ENCODE measurements at regions of chr10 and their contacts with region 1.

Region 1: DNA sequence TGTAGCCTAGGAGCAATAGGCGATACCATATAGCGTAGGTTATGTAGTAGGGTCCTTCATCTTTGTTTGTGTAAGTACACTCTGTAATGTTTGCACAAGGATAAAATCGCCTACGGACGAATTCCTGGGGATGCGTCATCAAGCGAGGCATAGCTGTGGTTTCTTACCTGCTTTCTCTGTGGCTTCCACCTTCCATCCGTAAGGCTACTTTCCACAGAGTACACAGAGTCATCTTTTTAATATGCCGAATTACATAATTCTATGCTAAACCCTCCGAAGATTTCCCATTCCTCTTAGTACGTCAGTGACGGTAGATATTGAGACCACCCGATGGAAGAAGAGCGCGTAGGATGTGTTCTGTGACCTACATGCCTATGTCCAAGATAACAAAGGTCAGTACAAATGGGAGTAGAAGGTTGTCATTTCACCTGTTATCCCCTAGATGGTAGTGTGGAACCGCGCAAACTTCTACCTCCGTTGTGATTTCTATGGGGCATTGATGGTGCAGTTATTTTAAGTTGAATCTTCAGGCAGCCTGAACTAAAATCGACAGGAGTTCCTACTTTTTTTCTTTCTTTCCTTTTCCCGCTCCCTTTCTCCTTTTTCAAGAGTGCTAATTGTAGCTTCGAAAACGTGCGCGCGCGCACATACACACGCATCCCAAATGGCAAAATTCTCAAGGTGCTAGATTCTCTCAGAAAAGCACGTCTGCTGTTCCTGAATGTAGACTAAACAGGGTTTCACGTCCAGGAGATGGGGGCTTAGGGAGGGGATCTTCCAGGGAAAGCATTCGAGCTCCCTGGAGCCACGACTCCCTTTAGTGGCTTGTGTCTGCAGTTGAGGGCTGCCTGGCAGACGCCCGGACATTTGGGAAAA is 111.7 kb upstream of the MBL2 start:
- DNase-seq: peak; percentile 100
- ATAC-seq: peak; percentile 91
- H3K4me3 ChIP-seq: peak overlapping the region; percentile 52
- H3K27ac ChIP-seq: peak overlapping the region; percentile 52
- H3K4me1 ChIP-seq: peaks cover 25% of the 10 kb centered on the region
- H3K27me3 ChIP-seq: no peaks in the 10 kb centered on the region
- CTCF ChIP-seq: peak; percentile 100

Region 2: GRCh38 chr10:52729271-52730104 is 154.7 kb before region 1 on chr10:
- CTCF ChIA-PET with region 1: no interaction called
- POLR2A ChIA-PET with region 1: no interaction called
- intact Hi-C with region 1: no loop called
- DNase-seq: peak; percentile 95
- ATAC-seq: peak; percentile 93
- H3K4me3 ChIP-seq: peak overlapping the region; percentile 41
- H3K27ac ChIP-seq: no peak overlapping the region
- H3K4me1 ChIP-seq: peaks cover 16% of the 10 kb centered on the region
- H3K27me3 ChIP-seq: no peaks in the 10 kb centered on the region
- CTCF ChIP-seq: peak; percentile 100

Region 3: DNA sequence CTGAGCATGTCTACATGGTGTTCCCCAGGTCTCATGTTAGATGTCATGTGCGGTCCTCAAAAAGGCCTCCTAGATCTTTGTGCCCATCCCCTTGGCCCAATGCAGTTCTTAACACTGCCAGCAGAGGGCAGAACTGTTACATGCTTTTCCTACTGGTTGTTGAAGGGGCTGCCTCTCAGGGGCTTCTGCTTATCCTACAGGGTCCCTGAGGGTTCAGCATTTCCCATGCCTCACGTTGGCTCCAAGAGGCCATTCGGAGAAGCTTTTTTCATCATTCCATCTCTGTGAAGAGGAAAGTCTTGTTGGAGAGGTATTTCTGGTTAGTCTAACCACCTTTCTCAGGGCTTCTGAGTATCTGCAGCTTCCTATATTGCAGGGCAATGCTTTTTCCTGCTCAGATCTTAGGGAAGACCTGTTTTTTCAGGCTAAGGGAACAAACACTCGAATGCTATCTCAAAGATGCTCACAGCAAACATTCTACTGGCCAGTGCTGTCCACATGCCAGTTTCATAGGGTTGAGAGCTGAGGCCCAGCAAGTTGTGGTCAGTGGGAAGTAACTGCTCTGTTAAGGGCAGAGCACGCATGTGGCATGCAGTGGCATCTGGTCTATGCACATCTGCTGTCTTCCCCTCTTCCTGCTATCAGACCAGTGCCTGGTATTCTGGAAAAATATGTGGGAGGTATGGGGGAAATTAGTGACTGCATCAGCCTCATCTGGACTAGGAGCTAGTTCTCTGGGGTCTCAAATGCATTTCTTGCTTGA is 143.1 kb before region 1 on chr10:
- CTCF ChIA-PET with region 1: no interaction called
- POLR2A ChIA-PET with region 1: no interaction called
- intact Hi-C with region 1: loop called (anchors 5 kb)
- DNase-seq: peak; percentile 96
- ATAC-seq: peak; percentile 72
- H3K4me3 ChIP-seq: no peak overlapping the region
- H3K27ac ChIP-seq: no peak overlapping the region
- H3K4me1 ChIP-seq: no peaks in the 10 kb centered on the region
- H3K27me3 ChIP-seq: no peaks in the 10 kb centered on the region
- CTCF ChIP-seq: peak; percentile 100

Region 4: GRCh38 chr10:52864201-52865106 is 19.8 kb before region 1 on chr10:
- CTCF ChIA-PET with region 1: interaction called, 25 read pairs
- POLR2A ChIA-PET with region 1: interaction called, 5 read pairs
- intact Hi-C with region 1: loop called (anchors 1 kb)
- DNase-seq: peak; percentile 100
- ATAC-seq: peak; percentile 100
- H3K4me3 ChIP-seq: no peak overlapping the region
- H3K27ac ChIP-seq: peak overlapping the region; percentile 81
- H3K4me1 ChIP-seq: peaks cover 22% of the 10 kb centered on the region
- H3K27me3 ChIP-seq: no peaks in the 10 kb centered on the region
- CTCF ChIP-seq: no peak

Region 5: DNA sequence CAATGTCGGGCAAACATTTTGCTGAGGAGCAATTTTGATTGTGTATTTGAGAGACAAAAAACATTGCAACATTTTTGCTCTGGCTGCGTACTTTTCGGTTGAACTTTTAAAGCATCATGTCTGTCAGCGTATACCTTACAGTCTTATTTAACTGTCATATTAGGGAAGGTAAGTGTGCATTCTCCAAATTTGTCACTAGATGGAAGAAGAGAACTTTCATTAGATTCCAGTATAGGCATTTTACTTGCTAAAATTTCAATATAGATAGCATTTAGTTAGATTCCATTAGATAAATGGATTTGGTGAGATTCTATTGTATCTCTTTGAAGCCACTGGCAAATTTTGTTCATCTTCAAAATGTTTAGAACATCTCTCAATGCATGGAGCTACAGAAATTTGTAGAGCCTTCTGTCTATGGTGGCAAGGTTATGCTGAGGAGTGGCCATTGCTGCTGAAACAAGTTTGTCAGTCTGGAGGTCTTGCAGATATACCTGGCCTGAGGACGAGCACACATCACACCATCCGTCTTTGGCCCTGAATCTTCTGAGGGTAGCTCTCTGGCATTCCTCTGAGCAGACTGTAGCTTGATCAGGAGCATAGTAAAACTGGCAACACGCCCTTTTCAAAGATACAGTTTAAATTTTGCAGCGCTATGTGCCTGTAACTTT is 325.8 kb after region 1 on chr10:
- CTCF ChIA-PET with region 1: interaction called, 3 read pairs
- POLR2A ChIA-PET with region 1: no interaction called
- intact Hi-C with region 1: loop called (anchors 1 kb)
- DNase-seq: peak; percentile 97
- ATAC-seq: peak; percentile 96
- H3K4me3 ChIP-seq: no peak overlapping the region
- H3K27ac ChIP-seq: no peak overlapping the region
- H3K4me1 ChIP-seq: no peaks in the 10 kb centered on the region
- H3K27me3 ChIP-seq: no peaks in the 10 kb centered on the region
- CTCF ChIP-seq: peak; percentile 99

Region 6: GRCh38 chr10:53601260-53601875 is 717.1 kb after region 1 on chr10:
- CTCF ChIA-PET with region 1: interaction called, 3 read pairs
- POLR2A ChIA-PET with region 1: no interaction called
- intact Hi-C with region 1: loop called (anchors 1 kb)
- DNase-seq: peak; percentile 92
- ATAC-seq: peak; percentile 55
- H3K4me3 ChIP-seq: no peak overlapping the region
- H3K27ac ChIP-seq: no peak overlapping the region
- H3K4me1 ChIP-seq: peaks cover 20% of the 10 kb centered on the region
- H3K27me3 ChIP-seq: no peaks in the 10 kb centered on the region
- CTCF ChIP-seq: peak; percentile 100; the same call in 1 of the 2 replicates

Region 7: DNA sequence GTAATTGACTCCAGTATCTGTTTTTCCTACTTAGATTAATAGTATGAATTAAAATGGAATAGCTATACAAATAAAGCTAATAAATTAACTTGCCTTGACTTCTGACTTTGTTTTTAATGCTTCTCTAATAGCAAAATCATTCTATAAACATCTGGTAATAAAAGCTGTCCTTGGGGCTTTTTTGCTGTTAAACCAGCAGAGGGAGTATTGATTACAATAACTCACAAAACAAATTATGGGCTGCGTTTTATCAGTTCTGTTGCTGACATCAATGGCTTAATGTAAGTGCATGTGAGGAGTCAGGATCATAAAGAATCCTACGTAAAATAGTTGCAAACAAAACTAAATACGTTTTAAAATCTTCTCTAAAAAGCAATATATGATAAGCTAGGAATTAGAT is 1249.0 kb after region 1 on chr10:
- CTCF ChIA-PET with region 1: no interaction called
- POLR2A ChIA-PET with region 1: no interaction called
- intact Hi-C with region 1: loop called (anchors 10 kb)
- DNase-seq: peak; percentile 54
- ATAC-seq: peak; percentile 63
- H3K4me3 ChIP-seq: no peak overlapping the region
- H3K27ac ChIP-seq: no peak overlapping the region
- H3K4me1 ChIP-seq: no peaks in the 10 kb centered on the region
- H3K27me3 ChIP-seq: no peaks in the 10 kb centered on the region
- CTCF ChIP-seq: peak; percentile 91